Ascending aorta (tissue), 2 donors: ENCODE measurements at regions of chr21 and their contacts with region 1.

Region 1: DNA sequence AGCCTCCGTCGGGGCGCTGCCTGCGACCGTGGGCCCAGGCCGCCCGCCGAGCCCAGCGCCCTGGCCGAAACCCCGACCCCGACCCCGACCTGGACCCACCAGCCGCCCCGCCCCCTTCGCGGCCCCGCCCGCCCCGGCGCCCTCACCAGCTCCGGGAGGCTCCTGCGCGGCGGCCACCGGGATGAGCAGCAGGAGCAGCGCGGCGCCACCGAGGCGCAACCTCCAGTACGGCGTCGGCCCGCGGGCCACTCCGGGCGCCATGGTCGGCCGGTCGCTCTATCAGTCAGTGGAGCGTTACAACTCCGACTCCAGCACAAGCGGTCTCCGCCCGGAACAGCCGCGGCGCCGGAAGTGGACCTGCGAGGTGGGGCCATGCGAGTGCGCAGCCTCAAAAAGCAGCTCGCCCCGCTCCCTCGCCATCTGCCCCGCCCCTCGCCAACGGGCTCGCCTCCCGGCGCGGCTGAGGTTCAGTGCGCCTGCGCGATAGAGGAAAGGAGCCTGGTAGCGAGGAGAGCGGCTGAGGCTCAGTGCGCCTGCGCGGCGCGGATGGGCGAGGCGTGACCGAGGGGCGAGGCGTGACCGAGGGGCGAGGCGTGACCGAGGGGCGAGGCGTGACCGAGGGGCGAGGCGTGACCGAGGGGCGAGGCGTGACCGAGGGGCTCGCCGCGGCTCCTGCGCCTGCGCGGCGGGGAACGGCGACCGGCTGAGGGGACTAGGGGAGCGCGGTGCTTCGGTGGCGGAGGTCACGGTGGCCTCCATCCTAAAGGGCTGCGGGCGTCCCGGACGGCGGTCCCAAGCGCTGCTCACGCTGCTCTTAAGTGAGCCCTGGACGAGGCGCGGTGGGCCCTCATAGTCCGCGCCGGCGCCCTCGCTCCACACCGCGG is at the start of gene PTTG1IP:
- DNase-seq: peak; percentile 96 to 100
- H3K4me3 ChIP-seq: peak within 1 kb of the TSS; percentile 88 to 99
- H3K27ac ChIP-seq: peak within 1 kb of the TSS; percentile 95 to 98
- H3K4me1 ChIP-seq: peaks cover 18 to 36% of the 10 kb centered on the region in 2 donors
- H3K27me3 ChIP-seq: no peaks in the 10 kb centered on the region
- CTCF ChIP-seq: no peak
- total RNA-seq, gene PTTG1IP: 468 TPM

Region 2: GRCh38 chr21:44338971-44339910 is 534.4 kb before region 1 on chr21 and contains the start of gene CFAP410:
- intact Hi-C with region 1: loop called (anchors 5 kb)
- DNase-seq: peak; percentile 74 to 97
- H3K4me3 ChIP-seq: peak within 1 kb of the TSS; percentile 69 to 92
- H3K27ac ChIP-seq: peak within 1 kb of the TSS; percentile 92 to 99
- H3K4me1 ChIP-seq: peaks cover 4 to 12% of the 10 kb centered on the region in 2 donors
- H3K27me3 ChIP-seq: no peaks in the 10 kb centered on the region
- CTCF ChIP-seq: no peak
- total RNA-seq, gene CFAP410: 68.5 TPM

Region 3: GRCh38 chr21:44817506-44817880 is 56.1 kb before region 1 on chr21:
- intact Hi-C with region 1: loop called (anchors 1 kb)
- DNase-seq: peak; percentile 51 to 93
- H3K4me3 ChIP-seq: peak overlapping the region; percentile 60 to 85
- H3K27ac ChIP-seq: peak overlapping the region; percentile 73 to 82
- H3K4me1 ChIP-seq: peaks cover 5 to 12% of the 10 kb centered on the region in 2 donors
- H3K27me3 ChIP-seq: no peaks in the 10 kb centered on the region
- CTCF ChIP-seq: no peak

Region 4: DNA sequence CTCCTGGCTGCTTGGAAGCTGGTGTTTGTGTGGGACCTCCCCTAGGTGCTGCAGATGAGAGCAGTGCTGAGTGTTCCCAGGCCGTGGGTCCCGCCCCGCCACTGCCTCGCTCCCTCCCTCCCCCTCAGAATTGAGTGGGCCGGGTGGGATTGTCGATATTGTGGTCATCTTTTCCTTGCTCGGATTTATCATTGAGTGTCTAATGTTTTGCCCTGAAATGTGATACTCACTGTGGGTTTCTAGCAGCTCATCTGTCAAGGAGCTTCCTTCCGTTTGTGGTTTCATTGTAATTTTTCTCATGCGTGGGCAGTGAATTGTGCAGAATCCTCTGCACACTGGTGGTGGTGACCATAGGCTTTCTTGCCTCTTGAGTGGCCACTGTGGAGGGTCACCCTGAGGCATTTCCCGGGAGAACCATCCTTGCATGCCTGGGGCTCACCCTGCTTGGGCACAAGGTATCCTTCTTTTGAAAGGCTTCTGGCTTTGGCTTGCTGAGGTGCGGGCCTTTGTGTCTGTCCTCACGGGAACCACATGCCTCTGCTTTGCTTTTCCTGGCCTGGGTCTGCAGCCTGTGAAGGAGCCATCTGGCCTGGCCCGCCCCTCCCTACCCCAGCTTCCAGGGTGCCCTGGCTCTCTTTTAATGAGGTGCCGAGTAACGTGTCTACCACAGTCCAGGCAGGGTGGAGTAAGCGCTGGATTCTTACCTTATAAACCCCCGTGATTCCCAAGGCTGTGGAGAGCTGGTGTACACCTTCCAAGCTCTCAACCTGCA is 91.8 kb after region 1 on chr21:
- intact Hi-C with region 1: no loop called
- DNase-seq: no peak
- H3K4me3 ChIP-seq: no peak overlapping the region
- H3K27ac ChIP-seq: peak overlapping the region; percentile 72 to 87
- H3K4me1 ChIP-seq: peaks cover 23 to 56% of the 10 kb centered on the region in 2 donors
- H3K27me3 ChIP-seq: no peaks in the 10 kb centered on the region
- CTCF ChIP-seq: no peak

Region 5: DNA sequence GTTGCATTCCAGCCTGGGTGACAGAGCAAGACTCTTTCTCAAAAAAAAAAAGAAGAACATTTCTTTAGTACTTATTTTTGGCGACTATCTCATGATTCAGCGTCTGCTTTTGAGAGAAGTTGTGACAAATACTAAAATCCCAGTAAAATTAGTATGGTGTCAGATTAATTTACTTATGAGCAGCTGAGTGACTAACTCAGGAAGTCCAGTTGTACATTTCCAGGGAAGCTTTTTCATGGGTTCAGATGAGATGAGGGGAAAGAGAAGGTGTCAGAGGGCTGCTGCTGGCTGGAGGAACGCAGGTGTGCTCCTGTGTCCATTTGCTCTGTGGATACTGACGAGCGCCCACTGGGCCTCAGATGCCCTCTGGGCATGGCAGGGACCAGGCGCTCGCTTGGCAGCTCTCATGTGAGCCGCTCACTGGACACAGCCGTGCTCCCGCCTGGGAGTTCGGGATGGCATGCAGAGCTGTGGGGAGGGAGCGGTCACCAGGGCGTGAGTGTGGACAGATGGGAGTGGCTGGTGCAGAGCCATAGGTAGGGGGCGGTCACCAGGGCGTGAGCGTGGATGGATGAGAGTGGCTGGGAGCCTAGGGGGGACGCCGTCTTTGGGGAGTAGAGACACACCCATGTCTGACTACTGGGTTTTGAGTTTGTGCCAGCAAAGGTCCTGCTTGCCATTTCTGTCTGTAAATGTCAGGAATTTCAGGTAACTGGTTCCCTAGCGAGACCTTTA is 255.8 kb after region 1 on chr21:
- intact Hi-C with region 1: loop called (anchors 5 kb)
- DNase-seq: peak in 1 of 2 donors; percentile 78
- H3K4me3 ChIP-seq: peak overlapping the region in 1 of 2 donors; percentile 49
- H3K27ac ChIP-seq: peak overlapping the region; percentile 90 to 94
- H3K4me1 ChIP-seq: peaks cover 30 to 53% of the 10 kb centered on the region in 2 donors
- H3K27me3 ChIP-seq: no peaks in the 10 kb centered on the region
- CTCF ChIP-seq: no peak

Region 6: GRCh38 chr21:45643021-45643980 is 769.7 kb after region 1 on chr21 and contains the start of gene PCBP3:
- intact Hi-C with region 1: loop called (anchors 5 kb)
- DNase-seq: peak; percentile 84 to 98
- H3K4me3 ChIP-seq: peak within 1 kb of the TSS; percentile 67
- H3K27ac ChIP-seq: peak within 1 kb of the TSS in 1 of 2 donors; percentile 49
- H3K4me1 ChIP-seq: peaks cover 2 to 3% of the 10 kb centered on the region in 2 donors
- H3K27me3 ChIP-seq: peaks cover 4% of the 10 kb centered on the region
- CTCF ChIP-seq: no peak
- total RNA-seq, gene PCBP3: not detected

Region 7: GRCh38 chr21:46323227-46324128 is 1449.9 kb after region 1 on chr21 and contains the start of gene C21orf58:
- intact Hi-C with region 1: loop called (anchors 10 kb)
- DNase-seq: peak; percentile 92 to 99
- H3K4me3 ChIP-seq: peak within 1 kb of the TSS; percentile 81 to 98
- H3K27ac ChIP-seq: peak within 1 kb of the TSS; percentile 97
- H3K4me1 ChIP-seq: peaks cover 15 to 20% of the 10 kb centered on the region in 2 donors
- H3K27me3 ChIP-seq: no peaks in the 10 kb centered on the region
- CTCF ChIP-seq: peak in 1 of 3 experiments; percentile 4
- total RNA-seq, gene C21orf58: 3.2 TPM